Activated B cell treated with CpG ODN at 0.5 μM for 24 hours (primary cell): ENCODE measurements at regions of chr5 and their contacts with region 1.

Region 1: DNA sequence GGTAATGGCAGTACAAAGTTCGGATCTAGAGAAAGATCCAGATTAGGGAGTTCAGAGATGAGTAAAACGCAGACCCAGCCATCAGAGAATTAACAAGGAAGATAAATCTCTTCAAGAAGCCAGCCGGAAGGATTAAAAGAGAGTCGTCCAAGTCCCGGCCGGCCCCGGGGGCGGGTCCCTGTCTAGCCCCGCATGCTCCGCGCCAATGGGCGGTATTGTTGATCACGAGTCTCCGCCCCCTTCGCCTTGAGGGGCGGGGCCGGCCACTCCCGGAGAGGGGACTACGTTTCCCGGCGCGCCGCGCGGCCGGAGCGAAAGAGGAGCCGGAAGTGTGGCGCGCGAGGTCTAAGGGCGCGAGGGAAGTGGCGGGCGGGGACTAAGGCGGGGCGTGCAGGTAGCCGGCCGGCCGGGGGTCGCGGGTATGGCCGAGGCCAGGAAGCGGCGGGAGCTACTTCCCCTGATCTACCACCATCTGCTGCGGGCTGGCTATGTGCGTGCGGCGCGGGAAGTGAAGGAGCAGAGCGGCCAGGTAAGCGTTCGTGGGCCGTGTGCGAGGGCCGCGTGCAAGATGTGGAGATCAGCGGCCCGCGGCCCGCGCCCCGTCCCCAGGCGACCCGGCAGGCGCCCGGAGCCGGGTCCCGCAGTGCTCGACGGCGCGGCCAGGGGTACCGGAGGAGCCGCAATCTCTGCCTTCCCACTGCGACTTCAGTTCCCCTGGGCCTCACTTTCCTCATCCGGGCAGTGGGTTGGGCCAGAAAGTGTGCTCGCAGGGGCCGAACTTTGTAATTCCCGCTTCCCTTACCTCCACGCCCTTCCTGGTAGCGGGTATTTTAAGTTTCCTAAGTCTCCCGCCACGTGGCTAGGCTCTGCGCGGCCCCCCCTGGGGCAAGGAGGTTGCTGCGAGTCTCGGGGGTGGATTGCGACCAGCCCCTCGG is at the start of gene TCOF1:
- DNase-seq: peak; percentile 98
- ATAC-seq: peak; percentile 97
- H3K4me3 Mint-ChIP-seq: peak within 1 kb of the TSS; percentile 89
- H3K27ac Mint-ChIP-seq: peak within 1 kb of the TSS; percentile 93
- H3K4me1 Mint-ChIP-seq: peaks cover 49% of the 10 kb centered on the region
- H3K27me3 Mint-ChIP-seq: no peaks in the 10 kb centered on the region
- CTCF ChIP-seq: no peak
- total RNA-seq, gene TCOF1: 74.7 and 76.1 TPM in 2 replicates

Region 2: GRCh38 chr5:150258130-150258529 is 99.5 kb before region 1 on chr5:
- CTCF ChIA-PET with region 1: no interaction called
- POLR2A ChIA-PET with region 1: no interaction called
- intact Hi-C with region 1: no loop called
- DNase-seq: no peak
- ATAC-seq: no peak
- H3K4me3 Mint-ChIP-seq: no peak overlapping the region
- H3K27ac Mint-ChIP-seq: no peak overlapping the region
- H3K4me1 Mint-ChIP-seq: no peaks in the 10 kb centered on the region
- H3K27me3 Mint-ChIP-seq: no peaks in the 10 kb centered on the region
- CTCF ChIP-seq: no peak

Region 3: GRCh38 chr5:150386024-150386864 is 28.7 kb after region 1 on chr5:
- CTCF ChIA-PET with region 1: no interaction called
- POLR2A ChIA-PET with region 1: no interaction called
- intact Hi-C with region 1: no loop called
- DNase-seq: no peak
- ATAC-seq: no peak
- H3K4me3 Mint-ChIP-seq: no peak overlapping the region
- H3K27ac Mint-ChIP-seq: no peak overlapping the region
- H3K4me1 Mint-ChIP-seq: no peaks in the 10 kb centered on the region
- H3K27me3 Mint-ChIP-seq: no peaks in the 10 kb centered on the region
- CTCF ChIP-seq: no peak

Region 4: GRCh38 chr5:150398722-150399523 is 41.3 kb after region 1 on chr5:
- CTCF ChIA-PET with region 1: interaction called, 4 read pairs
- POLR2A ChIA-PET with region 1: interaction called, 14 read pairs
- intact Hi-C with region 1: loop called (anchors 2 kb)
- DNase-seq: peak; percentile 59
- ATAC-seq: peak; percentile 71
- H3K4me3 Mint-ChIP-seq: peak overlapping the region; percentile 28
- H3K27ac Mint-ChIP-seq: peak overlapping the region; percentile 80
- H3K4me1 Mint-ChIP-seq: peaks cover 50% of the 10 kb centered on the region
- H3K27me3 Mint-ChIP-seq: no peaks in the 10 kb centered on the region
- CTCF ChIP-seq: no peak